Naive thymus-derived CD4-positive, alpha-beta T cell (primary cell): ENCODE measurements at regions of chr5 and their contacts with region 1.

Region 1: DNA sequence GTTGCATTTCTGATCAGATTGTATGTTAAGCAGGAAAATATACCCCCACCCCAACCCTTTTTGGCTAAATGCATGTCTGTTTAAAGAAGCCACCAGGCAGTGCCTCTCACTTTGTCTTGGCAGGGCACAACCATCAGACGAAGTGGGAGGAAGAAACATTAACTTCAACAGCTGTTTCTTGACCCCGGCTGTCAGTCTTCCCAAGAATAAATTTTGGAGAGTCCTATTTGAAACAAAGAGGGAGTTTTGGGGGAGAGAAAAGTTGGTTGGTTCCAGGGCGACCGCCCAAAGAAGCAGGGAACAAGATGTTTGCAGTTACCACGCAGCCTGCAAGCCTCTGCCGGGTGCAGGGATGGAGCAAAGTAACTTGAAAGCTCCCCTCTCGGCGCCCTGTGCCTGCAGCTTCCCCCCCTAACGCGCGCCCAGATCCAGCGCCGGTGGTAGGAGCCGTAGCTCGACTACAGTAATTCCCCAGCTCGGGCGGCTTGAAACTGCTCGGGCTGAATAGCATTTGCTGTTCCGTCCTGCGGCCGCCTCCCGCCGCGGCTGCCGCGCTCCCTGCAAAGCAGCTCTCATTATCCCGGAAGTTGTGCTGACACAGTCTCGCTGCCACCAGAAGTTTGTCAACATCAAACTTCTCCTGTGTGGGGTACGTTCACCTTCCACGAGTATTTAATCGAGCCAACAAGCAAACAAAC is 100.7 kb upstream of the SSBP2 start:
- DNase-seq: peak; percentile 76 to 92 (median 89)
- ATAC-seq: peak; percentile 95
- H3K4me3 ChIP-seq: peak overlapping the region; percentile 82
- H3K4me3 Mint-ChIP-seq: peak overlapping the region; percentile 92 to 98 (median 94)
- H3K27ac ChIP-seq: peak overlapping the region; percentile 71
- H3K27ac Mint-ChIP-seq: peak overlapping the region; percentile 96 to 100 (median 97)
- H3K4me1 ChIP-seq: peaks cover 18 to 22% of the 10 kb centered on the region in 2 donors
- H3K4me1 Mint-ChIP-seq: peaks cover 23 to 71% (median 56%) of the 10 kb centered on the region in 7 donors
- H3K27me3 ChIP-seq: no peaks in the 10 kb centered on the region
- H3K27me3 Mint-ChIP-seq: no peaks in the 10 kb centered on the region

Region 2: GRCh38 chr5:81425569-81425968 is 426.1 kb before region 1 on chr5:
- CTCF ChIA-PET with region 1: no interaction called
- POLR2A ChIA-PET with region 1: no interaction called
- intact Hi-C with region 1: loop called (anchors 2 to 5 kb)
- DNase-seq: peak in 7 of 9 donors; percentile 15 to 72 (median 58)
- ATAC-seq: peak; percentile 73
- H3K4me3 ChIP-seq: no peak overlapping the region
- H3K4me3 Mint-ChIP-seq: peak overlapping the region in 2 of 10 donors; percentile 6 to 8
- H3K27ac ChIP-seq: no peak overlapping the region
- H3K27ac Mint-ChIP-seq: peak overlapping the region in 6 of 9 donors; percentile 9 to 65 (median 48)
- H3K4me1 ChIP-seq: peaks cover 0 to 6% of the 10 kb centered on the region in 2 donors
- H3K4me1 Mint-ChIP-seq: peaks cover 3 to 25% (median 13%) of the 10 kb centered on the region in 7 donors
- H3K27me3 ChIP-seq: no peaks in the 10 kb centered on the region
- H3K27me3 Mint-ChIP-seq: no peaks in the 10 kb centered on the region

Region 3: DNA sequence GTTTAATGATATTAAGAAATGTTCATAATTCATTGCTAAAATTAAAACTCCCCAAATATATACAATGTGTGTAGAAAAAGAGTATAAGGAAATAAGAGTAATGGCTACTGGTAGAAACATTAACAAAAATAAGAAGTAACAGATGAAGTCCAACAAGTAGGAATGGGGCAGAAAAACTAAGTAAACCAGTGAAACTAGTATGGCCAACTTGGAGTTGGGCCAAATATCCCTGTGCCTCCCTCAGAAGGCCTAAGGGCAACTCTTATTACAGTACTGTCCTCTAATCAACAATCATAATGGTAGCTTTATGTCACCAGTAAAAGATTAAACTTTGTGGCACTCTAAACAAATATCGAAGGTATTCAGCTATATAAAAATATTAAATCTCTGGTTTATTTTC is 194.2 kb before region 1 on chr5:
- CTCF ChIA-PET with region 1: no interaction called
- POLR2A ChIA-PET with region 1: no interaction called
- intact Hi-C with region 1: no loop called
- DNase-seq: no peak
- ATAC-seq: no peak
- H3K4me3 ChIP-seq: no peak overlapping the region
- H3K4me3 Mint-ChIP-seq: no peak overlapping the region
- H3K27ac ChIP-seq: no peak overlapping the region
- H3K27ac Mint-ChIP-seq: peak overlapping the region in 1 of 9 donors; percentile 50
- H3K4me1 ChIP-seq: no peaks in the 10 kb centered on the region
- H3K4me1 Mint-ChIP-seq: peaks cover 0 to 69% (median 45%) of the 10 kb centered on the region in 7 donors
- H3K27me3 ChIP-seq: no peaks in the 10 kb centered on the region
- H3K27me3 Mint-ChIP-seq: no peaks in the 10 kb centered on the region

Region 4: GRCh38 chr5:81759632-81760005 is 92.0 kb before region 1 on chr5:
- CTCF ChIA-PET with region 1: interaction called, 4 read pairs
- POLR2A ChIA-PET with region 1: interaction called, 172 read pairs
- intact Hi-C with region 1: no loop called
- DNase-seq: no peak
- ATAC-seq: no peak
- H3K4me3 ChIP-seq: no peak overlapping the region
- H3K4me3 Mint-ChIP-seq: peak overlapping the region in 7 of 10 donors; percentile 0 to 48 (median 32)
- H3K27ac ChIP-seq: no peak overlapping the region
- H3K27ac Mint-ChIP-seq: peak overlapping the region in 4 of 9 donors; percentile 1 to 69 (median 16)
- H3K4me1 ChIP-seq: peaks cover 0 to 7% of the 10 kb centered on the region in 2 donors
- H3K4me1 Mint-ChIP-seq: peaks cover 9 to 39% (median 36%) of the 10 kb centered on the region in 7 donors
- H3K27me3 ChIP-seq: no peaks in the 10 kb centered on the region
- H3K27me3 Mint-ChIP-seq: peaks cover 0 to 15% (median 0%) of the 10 kb centered on the region in 5 donors

Region 5: GRCh38 chr5:81805086-81805485 is 46.5 kb before region 1 on chr5:
- CTCF ChIA-PET with region 1: no interaction called
- POLR2A ChIA-PET with region 1: interaction called, 3 read pairs
- intact Hi-C with region 1: loop called in 1 of 2 experiments (anchors 1 kb)
- DNase-seq: peak in 1 of 9 donors; percentile 16
- ATAC-seq: no peak
- H3K4me3 ChIP-seq: no peak overlapping the region
- H3K4me3 Mint-ChIP-seq: peak overlapping the region in 2 of 10 donors; percentile 2 to 24
- H3K27ac ChIP-seq: no peak overlapping the region
- H3K27ac Mint-ChIP-seq: peak overlapping the region in 1 of 9 donors; percentile 11
- H3K4me1 ChIP-seq: no peaks in the 10 kb centered on the region
- H3K4me1 Mint-ChIP-seq: peaks cover 7 to 13% (median 10%) of the 10 kb centered on the region in 7 donors
- H3K27me3 ChIP-seq: no peaks in the 10 kb centered on the region
- H3K27me3 Mint-ChIP-seq: peaks cover 0 to 12% (median 0%) of the 10 kb centered on the region in 5 donors

Region 6: GRCh38 chr5:81971712-81972495 is 120.3 kb after region 1 on chr5 and contains the start of gene ATG10:
- CTCF ChIA-PET with region 1: no interaction called
- POLR2A ChIA-PET with region 1: interaction called, 9 read pairs
- intact Hi-C with region 1: loop called (anchors 1 kb)
- DNase-seq: peak; percentile 78 to 93 (median 84)
- ATAC-seq: peak; percentile 95
- H3K4me3 ChIP-seq: peak within 1 kb of the TSS; percentile 67
- H3K4me3 Mint-ChIP-seq: peak within 1 kb of the TSS; percentile 91 to 100 (median 97)
- H3K27ac ChIP-seq: peak within 1 kb of the TSS; percentile 97
- H3K27ac Mint-ChIP-seq: peak within 1 kb of the TSS; percentile 95 to 99 (median 99)
- H3K4me1 ChIP-seq: peaks cover 5 to 10% of the 10 kb centered on the region in 2 donors
- H3K4me1 Mint-ChIP-seq: peaks cover 9 to 40% (median 33%) of the 10 kb centered on the region in 7 donors
- H3K27me3 ChIP-seq: no peaks in the 10 kb centered on the region
- H3K27me3 Mint-ChIP-seq: no peaks in the 10 kb centered on the region
- total RNA-seq, gene ATG10: 6.4 to 9.6 (median 8.2) TPM

Region 7: DNA sequence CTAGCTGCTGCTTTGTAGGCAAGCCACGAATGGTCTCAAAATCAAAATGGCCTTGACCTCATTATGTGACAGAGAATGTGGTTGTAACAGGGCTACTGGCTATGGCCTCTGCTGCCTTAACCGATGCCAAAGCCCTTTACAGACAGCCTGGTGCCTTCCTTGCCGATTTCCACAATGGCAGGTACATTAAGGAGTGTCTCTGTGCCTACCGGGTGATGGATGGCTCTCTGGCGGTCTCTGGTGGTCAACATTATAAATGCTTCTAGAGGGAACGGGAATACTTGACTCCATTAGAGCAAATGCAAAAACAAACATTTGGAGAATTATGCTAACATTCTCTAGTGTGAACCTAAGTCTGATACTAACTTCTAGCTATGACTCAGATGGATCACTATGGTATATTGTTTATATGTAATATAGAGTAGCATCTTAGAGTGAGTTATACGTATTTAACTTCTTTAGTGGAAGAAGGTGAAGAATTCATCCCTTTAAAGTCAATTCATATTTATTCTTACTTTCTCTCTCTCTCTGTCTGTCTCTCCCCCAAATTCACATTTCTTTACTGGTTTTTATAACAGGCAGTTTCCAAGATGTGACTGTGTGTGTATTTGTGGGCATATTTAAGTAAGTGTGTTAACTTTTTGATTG is 374.0 kb after region 1 on chr5:
- CTCF ChIA-PET with region 1: no interaction called
- POLR2A ChIA-PET with region 1: no interaction called
- intact Hi-C with region 1: loop called in 1 of 2 experiments (anchors 5 kb)
- DNase-seq: peak; percentile 30 to 63 (median 57)
- ATAC-seq: peak; percentile 90
- H3K4me3 ChIP-seq: no peak overlapping the region
- H3K4me3 Mint-ChIP-seq: peak overlapping the region in 2 of 10 donors; percentile 23 to 33
- H3K27ac ChIP-seq: no peak overlapping the region
- H3K27ac Mint-ChIP-seq: no peak overlapping the region
- H3K4me1 ChIP-seq: no peaks in the 10 kb centered on the region
- H3K4me1 Mint-ChIP-seq: peaks cover 0 to 11% (median 4%) of the 10 kb centered on the region in 7 donors
- H3K27me3 ChIP-seq: no peaks in the 10 kb centered on the region
- H3K27me3 Mint-ChIP-seq: no peaks in the 10 kb centered on the region